ENCODE measurements at regions of chr4 and their contacts with region 1.

Region 1: GRCh38 chr4:39527273-39528060 is at the start of gene UGDH:
- DNase-seq: peak; percentile 97 to 98
- ATAC-seq: peak; percentile 98 to 99 (median 98)
- H3K4me3 ChIP-seq: peak within 1 kb of the TSS; percentile 81
- H3K27ac ChIP-seq: peak within 1 kb of the TSS; percentile 94
- H3K4me1 ChIP-seq: peaks cover 25% of the 10 kb centered on the region
- H3K27me3 ChIP-seq: no peaks in the 10 kb centered on the region
- CTCF ChIP-seq: no peak
- total RNA-seq, gene UGDH: 7.7 to 9.8 (median 8.9) TPM

Region 2: DNA sequence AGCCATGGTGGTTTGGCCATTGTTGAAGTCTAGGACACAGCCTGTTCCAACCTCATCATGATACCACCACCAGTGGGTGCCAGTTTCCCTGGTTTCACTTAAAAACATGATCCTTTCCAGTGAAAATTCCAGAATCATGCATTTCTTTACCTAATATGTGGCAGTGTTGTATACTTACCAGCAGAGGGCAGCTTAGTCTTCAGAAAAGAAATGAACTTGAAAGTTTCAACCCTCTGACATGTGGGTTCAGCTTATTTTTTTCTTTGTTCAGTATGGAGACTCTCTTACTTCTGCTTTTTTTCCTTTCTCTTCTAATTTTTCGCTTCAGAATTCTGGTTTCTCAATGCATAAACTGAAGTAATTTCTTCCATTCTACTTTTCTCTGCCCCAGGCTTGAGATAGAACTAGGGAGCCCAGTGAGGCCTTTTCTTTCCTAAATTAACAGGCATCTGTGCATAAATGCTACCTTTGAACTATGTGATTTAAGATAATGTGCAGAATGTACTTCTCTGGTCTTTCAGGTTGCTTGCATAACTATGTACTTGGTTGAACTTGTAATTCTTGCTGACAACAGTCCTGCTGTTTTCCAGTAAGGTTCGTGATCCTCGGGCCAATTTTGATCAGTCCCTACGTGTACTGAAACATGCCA is 57.9 kb before region 1 on chr4:
- intact Hi-C with region 1: loop called in 1 of 2 experiments (anchors 5 kb)
- DNase-seq: no peak
- ATAC-seq: peak; percentile 60 to 88 (median 70)
- H3K4me3 ChIP-seq: no peak overlapping the region
- H3K27ac ChIP-seq: no peak overlapping the region
- H3K4me1 ChIP-seq: no peaks in the 10 kb centered on the region
- H3K27me3 ChIP-seq: no peaks in the 10 kb centered on the region
- CTCF ChIP-seq: peak; percentile 74

Region 3: DNA sequence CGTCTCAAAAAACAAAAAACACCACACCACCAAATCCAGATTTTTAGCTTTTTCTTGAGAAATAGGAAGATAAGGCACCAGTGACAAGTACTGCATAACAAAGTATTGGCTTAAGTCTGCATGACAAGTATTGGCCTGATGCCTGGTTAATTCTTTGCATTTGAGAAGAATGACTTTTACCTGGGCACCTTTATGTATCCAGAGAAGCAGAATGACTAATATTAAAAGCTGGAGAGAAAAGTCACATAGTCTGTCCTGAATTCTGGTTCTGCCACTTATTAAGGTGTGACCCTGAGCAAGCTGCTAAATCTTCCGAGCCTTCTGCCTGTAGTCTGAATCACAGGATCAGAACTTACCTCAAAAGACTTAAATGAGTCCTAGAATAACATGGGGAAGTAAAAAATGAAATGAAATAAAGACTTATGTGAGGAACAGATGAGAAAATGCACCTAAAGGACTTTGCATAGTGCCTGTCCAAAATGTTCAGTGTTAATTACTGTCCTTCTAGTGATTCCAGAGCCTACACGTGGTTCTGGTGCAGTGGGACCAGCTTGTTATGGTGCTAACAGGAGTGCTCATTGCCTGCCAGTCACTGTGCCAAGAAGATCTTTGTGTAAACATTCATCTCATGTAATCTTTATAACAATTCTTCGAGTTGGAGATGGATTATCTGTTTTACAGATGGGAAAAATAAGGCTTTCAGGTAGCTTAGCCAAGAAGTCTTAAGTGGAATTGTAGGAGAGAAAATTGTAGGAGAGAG is 31.8 kb before region 1 on chr4:
- intact Hi-C with region 1: no loop called
- DNase-seq: no peak
- ATAC-seq: no peak
- H3K4me3 ChIP-seq: no peak overlapping the region
- H3K27ac ChIP-seq: no peak overlapping the region
- H3K4me1 ChIP-seq: no peaks in the 10 kb centered on the region
- H3K27me3 ChIP-seq: no peaks in the 10 kb centered on the region
- CTCF ChIP-seq: no peak

Region 4: DNA sequence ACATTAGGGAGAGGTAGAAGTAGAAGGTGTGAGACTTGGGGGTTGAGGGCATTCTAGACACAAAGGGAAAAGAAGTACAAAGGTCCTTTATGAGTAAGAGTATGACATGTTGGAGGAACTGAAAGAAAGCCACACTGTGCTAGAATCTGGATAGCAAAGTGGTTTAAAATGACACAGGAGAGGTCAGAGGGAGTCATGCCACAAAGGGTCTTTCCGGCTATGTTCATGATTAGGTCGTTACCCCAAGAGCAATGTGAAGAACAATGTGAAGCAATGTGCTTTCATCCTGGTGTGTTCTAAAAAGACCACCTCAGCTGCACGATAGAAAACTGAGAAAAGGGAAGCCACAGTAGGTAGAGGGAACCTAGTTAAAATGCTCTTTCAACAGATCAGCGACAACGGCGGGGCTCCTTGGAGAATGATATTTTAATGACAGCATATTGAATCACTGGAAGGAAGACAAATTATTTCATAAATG is 82.0 kb after region 1 on chr4:
- intact Hi-C with region 1: no loop called
- DNase-seq: no peak
- ATAC-seq: no peak
- H3K4me3 ChIP-seq: no peak overlapping the region
- H3K27ac ChIP-seq: no peak overlapping the region
- H3K4me1 ChIP-seq: peaks cover 8% of the 10 kb centered on the region
- H3K27me3 ChIP-seq: no peaks in the 10 kb centered on the region
- CTCF ChIP-seq: no peak

Measured in psoas muscle (tissue), 8 donors.